Heart right ventricle (tissue), 16 donors: ENCODE measurements at regions of chr1 and their contacts with region 1.

Region 1: DNA sequence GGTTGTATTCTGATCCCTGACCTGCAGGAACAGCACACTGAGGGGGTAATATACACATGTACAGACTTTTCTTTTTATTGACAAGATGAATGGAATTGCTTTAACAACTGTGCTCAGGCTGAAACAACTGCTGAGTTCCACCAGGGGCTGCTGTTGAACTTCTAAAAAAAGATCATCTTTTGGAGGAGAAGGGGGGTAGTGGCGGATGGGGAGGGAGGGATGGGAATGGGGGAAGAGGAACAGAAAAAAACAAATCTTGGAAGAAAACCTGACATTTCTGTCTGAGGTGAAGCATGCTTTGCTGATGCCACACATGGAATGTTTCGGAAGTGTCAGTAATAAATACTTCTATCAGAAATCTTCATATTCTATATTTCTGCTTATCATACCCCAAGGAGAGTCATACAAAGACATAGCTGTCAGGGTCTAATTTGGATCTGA is 75.0 kb downstream of the RWDD3 start:
- DNase-seq: peak in 1 of 2 donors; percentile 20
- ATAC-seq: peak in 5 of 8 donors; percentile 55 to 81 (median 58)
- H3K4me3 ChIP-seq: no peak overlapping the region
- H3K27ac ChIP-seq: no peak overlapping the region
- H3K4me1 ChIP-seq: no peaks in the 10 kb centered on the region
- H3K27me3 ChIP-seq: peaks cover 0 to 28% (median 3%) of the 10 kb centered on the region in 7 donors
- CTCF ChIP-seq: peak; percentile 14 to 68 (median 52)

Region 2: GRCh38 chr1:95371666-95372282 is 62.7 kb after region 1 on chr1:
- intact Hi-C with region 1: no loop called
- DNase-seq: no peak
- ATAC-seq: no peak
- H3K4me3 ChIP-seq: no peak overlapping the region
- H3K27ac ChIP-seq: no peak overlapping the region
- H3K4me1 ChIP-seq: no peaks in the 10 kb centered on the region
- H3K27me3 ChIP-seq: peaks cover 0 to 4% (median 0%) of the 10 kb centered on the region in 7 donors
- CTCF ChIP-seq: no peak

Region 3: GRCh38 chr1:95440511-95440910 is 131.5 kb after region 1 on chr1:
- intact Hi-C with region 1: loop called in 1 of 10 experiments (anchors 10 kb)
- DNase-seq: no peak
- ATAC-seq: no peak
- H3K4me3 ChIP-seq: no peak overlapping the region
- H3K27ac ChIP-seq: no peak overlapping the region
- H3K4me1 ChIP-seq: no peaks in the 10 kb centered on the region
- H3K27me3 ChIP-seq: no peaks in the 10 kb centered on the region
- CTCF ChIP-seq: no peak

Region 4: DNA sequence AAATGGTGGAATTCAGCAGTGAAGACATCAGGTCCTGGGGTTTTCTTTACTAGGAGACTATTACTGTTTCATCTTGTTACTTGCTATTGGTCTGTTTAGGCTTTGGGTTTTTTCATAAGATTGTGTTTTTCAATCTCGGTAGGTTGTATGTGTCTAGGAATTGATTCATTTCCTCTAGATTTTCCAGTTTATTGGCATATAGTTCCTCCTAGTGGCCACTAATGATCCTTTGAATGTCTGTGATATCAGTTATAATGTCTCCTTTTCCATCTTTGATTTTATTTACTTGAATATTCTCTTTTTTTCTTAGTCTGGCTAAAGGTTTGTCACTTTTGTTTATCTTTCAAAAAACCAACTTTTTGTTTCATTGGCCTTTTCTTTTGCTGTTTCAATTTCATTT is 158.0 kb after region 1 on chr1:
- intact Hi-C with region 1: loop called in 4 of 10 experiments (anchors 2 to 10 kb)
- DNase-seq: no peak
- ATAC-seq: no peak
- H3K4me3 ChIP-seq: no peak overlapping the region
- H3K27ac ChIP-seq: no peak overlapping the region
- H3K4me1 ChIP-seq: no peaks in the 10 kb centered on the region
- H3K27me3 ChIP-seq: no peaks in the 10 kb centered on the region
- CTCF ChIP-seq: peak in 4 of 9 donors; percentile 19 to 44 (median 32)

Region 5: GRCh38 chr1:95475686-95476457 is 166.8 kb after region 1 on chr1:
- intact Hi-C with region 1: loop called in 1 of 10 experiments (anchors 10 kb)
- DNase-seq: no peak
- ATAC-seq: no peak
- H3K4me3 ChIP-seq: no peak overlapping the region
- H3K27ac ChIP-seq: no peak overlapping the region
- H3K4me1 ChIP-seq: no peaks in the 10 kb centered on the region
- H3K27me3 ChIP-seq: no peaks in the 10 kb centered on the region
- CTCF ChIP-seq: no peak